ENCODE measurements at regions of chr3 and their contacts with region 1.

Region 1: GRCh38 chr3:136752422-136753325 is 496 bp upstream of the STAG1 start:
- DNase-seq: peak; percentile 99
- H3K4me3 Mint-ChIP-seq: peak overlapping the region; percentile 86
- H3K27ac Mint-ChIP-seq: peak overlapping the region; percentile 97
- H3K4me1 Mint-ChIP-seq: peaks cover 29% of the 10 kb centered on the region
- H3K27me3 Mint-ChIP-seq: no peaks in the 10 kb centered on the region

Region 2: DNA sequence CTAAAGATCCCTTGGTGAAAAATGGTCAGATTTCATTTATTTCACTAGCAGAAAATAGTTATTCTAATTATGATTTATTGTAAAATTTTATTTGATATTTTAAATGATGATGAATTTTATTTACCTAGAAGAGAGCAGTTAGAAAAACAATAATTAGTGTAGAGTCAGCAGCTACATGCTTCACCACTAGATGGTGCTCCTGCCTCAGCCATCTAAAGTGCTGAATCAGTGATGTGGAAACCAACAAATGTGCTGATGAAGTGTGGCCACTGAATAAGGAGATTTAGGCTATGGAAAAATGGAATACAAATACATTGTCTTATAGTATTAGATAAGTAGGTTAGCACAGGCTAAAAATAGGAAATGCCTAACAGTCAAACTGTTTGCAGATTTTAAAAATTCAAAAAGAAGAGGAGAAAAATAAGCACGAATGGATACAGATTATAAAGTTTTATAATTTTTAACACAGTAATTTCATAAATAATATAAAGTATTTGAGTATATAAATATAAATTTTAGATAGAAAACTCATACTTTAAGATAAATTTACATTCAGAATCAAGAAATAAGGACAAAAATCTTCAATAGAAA is 677.4 kb before region 1 on chr3:
- CTCF ChIA-PET with region 1: interaction called, 9 read pairs
- intact Hi-C with region 1: loop called (anchors 1 kb)
- DNase-seq: peak; percentile 87
- H3K4me3 Mint-ChIP-seq: no peak overlapping the region
- H3K27ac Mint-ChIP-seq: no peak overlapping the region
- H3K4me1 Mint-ChIP-seq: peaks cover 4% of the 10 kb centered on the region
- H3K27me3 Mint-ChIP-seq: peaks cover 4% of the 10 kb centered on the region

Region 3: DNA sequence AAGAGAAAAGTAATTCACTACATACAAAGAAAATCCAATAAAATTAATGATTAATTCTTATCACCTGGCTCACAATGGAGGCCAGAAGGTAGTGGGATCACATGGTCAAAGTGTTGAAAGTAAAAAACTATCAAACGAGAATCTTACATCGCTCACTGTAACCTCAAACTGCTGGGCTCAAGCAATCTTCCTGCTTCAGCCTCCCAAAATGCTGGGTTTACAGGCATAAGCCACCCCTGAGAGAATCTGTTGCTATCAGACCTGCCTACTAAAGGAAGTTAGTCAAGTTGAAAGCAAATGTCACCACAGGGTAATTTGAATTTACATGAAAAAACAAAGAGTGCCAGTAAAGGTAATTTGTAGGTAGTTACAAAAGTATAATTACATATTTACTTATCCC is 399.2 kb before region 1 on chr3:
- CTCF ChIA-PET with region 1: interaction called, 3 read pairs
- intact Hi-C with region 1: loop called (anchors 1 kb)
- DNase-seq: peak; percentile 61
- H3K4me3 Mint-ChIP-seq: no peak overlapping the region
- H3K27ac Mint-ChIP-seq: peak overlapping the region; percentile 82
- H3K4me1 Mint-ChIP-seq: peaks cover 12% of the 10 kb centered on the region
- H3K27me3 Mint-ChIP-seq: no peaks in the 10 kb centered on the region

Region 4: GRCh38 chr3:136787349-136787748 is 34.7 kb after region 1 on chr3:
- CTCF ChIA-PET with region 1: interaction called, 4 read pairs
- intact Hi-C with region 1: loop called (anchors 1 kb)
- DNase-seq: peak; percentile 43
- H3K4me3 Mint-ChIP-seq: no peak overlapping the region
- H3K27ac Mint-ChIP-seq: no peak overlapping the region
- H3K4me1 Mint-ChIP-seq: peaks cover 15% of the 10 kb centered on the region
- H3K27me3 Mint-ChIP-seq: no peaks in the 10 kb centered on the region

Region 5: GRCh38 chr3:136938334-136938733 is 185.7 kb after region 1 on chr3:
- CTCF ChIA-PET with region 1: interaction called, 4 read pairs
- intact Hi-C with region 1: loop called (anchors 5 kb)
- DNase-seq: no peak
- H3K4me3 Mint-ChIP-seq: no peak overlapping the region
- H3K27ac Mint-ChIP-seq: no peak overlapping the region
- H3K4me1 Mint-ChIP-seq: peaks cover 53% of the 10 kb centered on the region
- H3K27me3 Mint-ChIP-seq: no peaks in the 10 kb centered on the region